ENCODE measurements at regions of chr3 and their contacts with region 1.

Region 1: DNA sequence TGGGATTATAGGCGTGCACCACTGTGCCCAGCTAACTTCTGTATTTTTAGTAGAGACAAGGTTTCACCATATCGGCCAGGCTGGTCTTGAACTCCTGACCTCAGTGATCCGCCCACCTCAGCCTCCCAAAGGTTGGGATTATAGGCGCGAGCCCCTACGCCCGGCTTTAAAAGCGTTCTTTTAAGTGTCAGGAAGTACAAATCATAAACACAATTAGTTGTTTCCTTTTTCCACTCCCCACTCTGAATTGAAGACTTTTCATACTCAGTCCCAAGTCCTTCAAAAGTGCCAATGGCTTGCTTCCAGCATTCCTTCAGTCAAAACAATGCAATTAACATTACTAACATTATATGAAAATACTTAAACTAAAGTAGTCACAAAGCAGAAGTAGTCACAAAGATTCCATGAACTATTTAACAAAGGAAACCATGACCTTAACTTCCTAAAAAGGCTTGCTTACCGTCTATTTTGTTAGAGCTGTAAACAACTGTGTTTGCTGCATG is 8.1 kb downstream of the WDR82 start:
- DNase-seq: no peak
- ATAC-seq: no peak
- H3K4me3 Mint-ChIP-seq: peak overlapping the region; percentile 69
- H3K27ac Mint-ChIP-seq: peak overlapping the region; percentile 85
- H3K4me1 Mint-ChIP-seq: peaks cover 84% of the 10 kb centered on the region
- H3K27me3 Mint-ChIP-seq: no peaks in the 10 kb centered on the region

Region 2: GRCh38 chr3:52245322-52246263 is 24.7 kb before region 1 on chr3 and contains the start of gene PPM1M:
- CTCF ChIA-PET with region 1: interaction called, 13 read pairs
- DNase-seq: peak; percentile 74
- ATAC-seq: peak; percentile 67
- H3K4me3 Mint-ChIP-seq: peak within 1 kb of the TSS; percentile 91
- H3K27ac Mint-ChIP-seq: peak within 1 kb of the TSS; percentile 90
- H3K4me1 Mint-ChIP-seq: peaks cover 79% of the 10 kb centered on the region
- H3K27me3 Mint-ChIP-seq: no peaks in the 10 kb centered on the region
- total RNA-seq, gene PPM1M: 91.1 to 94.1 TPM

Measured in activated CD8-positive, alpha-beta memory T cell treated with anti-CD3 and anti-CD28 coated beads, Interleukin-2, amount 10 ng/mL, durations not matched to agents 7 days and 5 days (primary cell).